Mammary epithelial cell (primary cell): ENCODE measurements at regions of chr20 and their contacts with region 1.

Region 1: GRCh38 chr20:60262967-60263603 is 304.9 kb downstream of the CDH26 start:
- DNase-seq: peak; percentile 28
- H3K4me3 ChIP-seq: no peak overlapping the region
- H3K27ac ChIP-seq: no peak overlapping the region
- H3K4me1 ChIP-seq: no peaks in the 10 kb centered on the region
- H3K27me3 ChIP-seq: no peaks in the 10 kb centered on the region
- CTCF ChIP-seq: peak; percentile 91 to 95

Region 2: GRCh38 chr20:59948828-59949720 is 314.0 kb before region 1 on chr20:
- CTCF ChIA-PET with region 1: no interaction called
- dilution Hi-C with region 1: no loop called
- in situ Hi-C with region 1: no loop called
- intact Hi-C with region 1: loop called (anchors 2 kb)
- DNase-seq: peak; percentile 37
- H3K4me3 ChIP-seq: no peak overlapping the region
- H3K27ac ChIP-seq: no peak overlapping the region
- H3K4me1 ChIP-seq: peaks cover 5% of the 10 kb centered on the region
- H3K27me3 ChIP-seq: no peaks in the 10 kb centered on the region
- CTCF ChIP-seq: peak; percentile 65 to 70

Region 3: GRCh38 chr20:60057123-60057801 is 205.8 kb before region 1 on chr20:
- CTCF ChIA-PET with region 1: no interaction called
- dilution Hi-C with region 1: no loop called
- in situ Hi-C with region 1: no loop called
- intact Hi-C with region 1: loop called (anchors 1 kb)
- DNase-seq: peak; percentile 65
- H3K4me3 ChIP-seq: peak overlapping the region in 1 of 3 experiments; percentile 58
- H3K27ac ChIP-seq: no peak overlapping the region
- H3K4me1 ChIP-seq: peaks cover 63% of the 10 kb centered on the region
- H3K27me3 ChIP-seq: no peaks in the 10 kb centered on the region
- CTCF ChIP-seq: peak; percentile 90

Region 4: DNA sequence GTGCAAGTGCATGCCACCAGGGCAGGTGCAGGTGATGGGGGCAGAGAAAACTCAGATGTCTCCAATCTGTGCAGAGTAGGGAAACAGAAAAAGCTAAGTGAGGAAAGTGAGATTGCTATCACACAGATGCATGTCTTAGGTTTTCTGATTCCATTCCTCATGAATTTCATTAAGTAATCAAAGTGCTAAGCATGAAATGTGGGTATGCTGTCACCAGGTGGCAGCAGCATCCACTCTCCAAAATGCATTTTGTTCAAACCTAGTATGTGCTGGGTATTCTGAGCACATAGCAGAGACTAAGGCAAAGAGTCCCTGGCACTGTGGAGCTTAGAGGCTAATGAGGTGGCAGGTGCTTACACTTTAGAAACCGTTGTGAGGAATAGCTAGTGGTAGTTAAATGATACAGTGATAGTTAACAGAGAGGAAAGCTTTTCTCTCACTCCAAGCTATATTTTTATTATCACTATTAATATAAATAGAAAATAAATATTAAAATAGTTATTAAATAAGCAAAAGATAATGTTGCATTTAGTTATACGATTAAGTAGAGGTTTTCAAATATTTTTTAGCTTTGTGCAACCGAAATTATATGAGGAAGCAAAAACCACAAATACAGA is 125.3 kb before region 1 on chr20:
- CTCF ChIA-PET with region 1: no interaction called
- dilution Hi-C with region 1: no loop called
- in situ Hi-C with region 1: no loop called
- intact Hi-C with region 1: loop called (anchors 1 kb)
- DNase-seq: peak; percentile 28
- H3K4me3 ChIP-seq: no peak overlapping the region
- H3K27ac ChIP-seq: no peak overlapping the region
- H3K4me1 ChIP-seq: peaks cover under 1% of the 10 kb centered on the region
- H3K27me3 ChIP-seq: no peaks in the 10 kb centered on the region
- CTCF ChIP-seq: peak; percentile 61 to 64

Region 5: DNA sequence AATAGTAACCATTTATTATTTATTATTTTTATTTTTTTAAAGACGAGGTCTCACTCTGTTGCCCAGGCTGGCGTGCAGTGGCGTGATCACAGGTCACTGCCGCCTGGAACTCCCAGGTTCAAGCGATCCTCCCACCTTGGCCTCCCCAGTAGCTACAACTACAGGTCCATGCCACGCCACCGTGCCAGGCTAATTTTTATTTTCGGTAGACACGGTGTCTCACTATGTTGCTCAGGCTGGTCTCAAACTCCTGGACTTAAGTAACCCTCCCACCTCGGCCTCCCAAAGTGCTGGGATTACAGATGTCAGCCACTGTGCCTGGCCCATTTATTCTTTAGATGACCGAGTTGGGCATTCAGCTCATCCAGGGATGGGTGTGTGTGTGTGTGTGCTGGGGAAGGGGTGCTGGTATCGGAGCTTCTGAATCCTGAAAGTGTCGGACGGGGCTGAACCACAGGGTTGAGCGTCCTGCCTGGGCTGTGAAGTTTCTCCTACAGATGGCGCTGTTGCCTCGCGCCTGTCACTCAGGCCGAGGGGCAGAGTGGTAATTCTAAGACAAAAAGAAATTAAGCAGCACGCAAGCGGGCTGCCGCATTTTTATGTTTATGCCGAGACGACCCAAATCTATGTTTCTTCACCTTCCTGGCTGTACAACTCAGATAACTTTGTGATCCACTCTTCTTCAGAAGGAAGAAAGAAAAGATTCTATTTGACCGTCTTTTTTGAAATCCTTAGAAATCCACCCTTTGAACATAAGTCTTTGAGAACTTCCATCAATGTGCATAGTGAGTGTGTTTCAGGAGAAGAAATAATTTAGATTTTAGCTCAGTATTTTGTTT is 52.1 kb before region 1 on chr20:
- CTCF ChIA-PET with region 1: no interaction called
- dilution Hi-C with region 1: loop called (anchors 10 kb)
- in situ Hi-C with region 1: no loop called
- intact Hi-C with region 1: loop called (anchors 1 kb)
- DNase-seq: peak; percentile 36
- H3K4me3 ChIP-seq: no peak overlapping the region
- H3K27ac ChIP-seq: no peak overlapping the region
- H3K4me1 ChIP-seq: no peaks in the 10 kb centered on the region
- H3K27me3 ChIP-seq: peaks cover 2% of the 10 kb centered on the region
- CTCF ChIP-seq: peak; percentile 94 to 97

Region 6: DNA sequence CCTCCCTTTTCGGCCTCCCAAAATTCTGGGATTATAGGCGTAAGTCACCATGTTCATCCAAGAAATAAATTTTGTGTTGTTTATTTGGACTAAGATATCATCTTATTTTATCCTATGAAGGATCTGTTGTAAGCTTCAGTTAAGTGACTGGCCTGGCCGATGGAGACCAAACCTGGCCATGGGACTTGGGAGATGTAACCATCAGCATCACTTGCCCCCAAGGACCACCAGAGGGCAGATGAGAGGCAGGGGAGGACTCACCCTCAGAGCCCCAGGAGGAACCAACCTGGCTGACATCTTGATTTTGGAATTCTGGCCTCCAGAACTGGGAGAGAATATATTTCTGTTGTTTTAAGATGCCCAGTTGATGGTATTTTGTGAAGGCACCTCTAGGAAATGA is 38.2 kb before region 1 on chr20:
- CTCF ChIA-PET with region 1: no interaction called
- dilution Hi-C with region 1: no loop called
- in situ Hi-C with region 1: no loop called
- intact Hi-C with region 1: loop called (anchors 1 kb)
- DNase-seq: peak; percentile 16
- H3K4me3 ChIP-seq: no peak overlapping the region
- H3K27ac ChIP-seq: no peak overlapping the region
- H3K4me1 ChIP-seq: peaks cover 5% of the 10 kb centered on the region
- H3K27me3 ChIP-seq: no peaks in the 10 kb centered on the region
- CTCF ChIP-seq: peak; percentile 60 to 64

Region 7: GRCh38 chr20:60249436-60249835 is 13.6 kb before region 1 on chr20:
- CTCF ChIA-PET with region 1: no interaction called
- dilution Hi-C with region 1: no loop called
- in situ Hi-C with region 1: no loop called
- intact Hi-C with region 1: loop called (anchors 1 kb)
- DNase-seq: peak; percentile 96
- H3K4me3 ChIP-seq: no peak overlapping the region
- H3K27ac ChIP-seq: peak overlapping the region; percentile 24
- H3K4me1 ChIP-seq: peaks cover 22% of the 10 kb centered on the region
- H3K27me3 ChIP-seq: no peaks in the 10 kb centered on the region
- CTCF ChIP-seq: no peak

Region 8: DNA sequence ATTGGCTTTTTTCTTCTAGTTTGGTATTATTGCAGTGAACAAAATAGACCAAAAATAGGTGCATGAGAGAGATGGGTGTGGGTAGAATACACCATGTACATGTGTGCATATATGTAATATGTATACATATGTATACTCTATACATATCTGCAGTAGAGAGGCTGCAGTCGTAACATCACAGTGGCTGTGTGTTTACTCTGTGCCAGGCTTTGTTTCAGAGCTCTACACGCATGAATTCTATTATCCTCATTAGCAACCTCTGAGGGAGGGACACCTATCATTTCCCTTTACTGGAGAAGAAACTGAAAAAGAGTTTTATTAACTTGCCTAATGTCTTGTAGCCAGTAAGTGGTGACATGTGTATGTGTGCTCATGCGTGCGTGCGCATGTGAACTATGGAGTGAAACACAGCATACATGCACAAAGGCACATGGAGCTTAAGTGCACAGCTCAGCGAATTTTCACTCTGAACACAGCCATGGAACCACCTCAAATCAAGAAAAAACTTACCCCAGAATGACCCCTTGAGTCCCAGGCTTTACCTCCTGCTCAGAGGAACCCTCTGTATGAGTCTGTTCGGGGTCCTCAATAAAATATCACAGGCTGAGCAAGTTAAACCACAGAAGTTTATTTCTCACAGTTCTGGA is 147.7 kb after region 1 on chr20:
- CTCF ChIA-PET with region 1: no interaction called
- dilution Hi-C with region 1: no loop called
- in situ Hi-C with region 1: no loop called
- intact Hi-C with region 1: no loop called
- DNase-seq: no peak
- H3K4me3 ChIP-seq: no peak overlapping the region
- H3K27ac ChIP-seq: no peak overlapping the region
- H3K4me1 ChIP-seq: peaks cover 14% of the 10 kb centered on the region
- H3K27me3 ChIP-seq: no peaks in the 10 kb centered on the region
- CTCF ChIP-seq: no peak